Heart left ventricle (tissue), 16 donors: ENCODE measurements at regions of chr16 and their contacts with region 1.

Region 1: DNA sequence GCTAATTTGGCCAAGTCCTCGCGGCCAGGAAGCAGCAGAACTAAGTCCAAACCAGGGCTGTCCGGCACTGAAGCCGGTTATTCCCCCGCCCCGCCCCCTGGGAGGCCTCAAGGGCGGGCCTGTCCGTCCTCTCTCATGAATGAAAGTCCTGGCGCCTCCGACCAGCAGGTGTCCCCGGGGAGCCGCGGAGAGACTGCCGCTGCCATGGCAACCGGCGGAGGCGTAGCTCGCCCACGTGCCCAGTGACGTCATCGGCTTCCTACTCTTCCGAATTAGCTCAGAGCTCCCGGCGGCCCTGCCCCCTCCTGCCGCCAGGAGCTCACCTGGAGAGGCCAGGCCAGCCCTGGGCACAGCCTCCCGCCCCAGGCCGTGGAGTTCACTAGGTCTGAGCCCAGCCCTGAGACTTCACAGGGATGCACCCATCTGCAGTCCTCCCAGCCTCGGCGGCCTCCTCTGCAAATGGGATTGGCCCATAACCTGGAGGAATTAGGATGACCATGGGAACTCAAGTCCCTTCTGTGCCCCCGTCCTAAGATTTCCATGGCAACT is 1.3 kb downstream of the SPATA2L start:
- DNase-seq: peak; percentile 99
- ATAC-seq: peak; percentile 76 to 93 (median 80)
- H3K4me3 ChIP-seq: peak overlapping the region in 11 of 12 donors; percentile 52 to 89 (median 70)
- H3K27ac ChIP-seq: peak overlapping the region in 11 of 12 donors; percentile 26 to 89 (median 74)
- H3K4me1 ChIP-seq: peaks cover 6 to 27% (median 21%) of the 10 kb centered on the region in 12 donors
- H3K27me3 ChIP-seq: no peaks in the 10 kb centered on the region
- CTCF ChIP-seq: peak; percentile 55 to 84 (median 64)
- POLR2A ChIP-seq: peak in 1 of 2 donors; percentile 43

Region 2: DNA sequence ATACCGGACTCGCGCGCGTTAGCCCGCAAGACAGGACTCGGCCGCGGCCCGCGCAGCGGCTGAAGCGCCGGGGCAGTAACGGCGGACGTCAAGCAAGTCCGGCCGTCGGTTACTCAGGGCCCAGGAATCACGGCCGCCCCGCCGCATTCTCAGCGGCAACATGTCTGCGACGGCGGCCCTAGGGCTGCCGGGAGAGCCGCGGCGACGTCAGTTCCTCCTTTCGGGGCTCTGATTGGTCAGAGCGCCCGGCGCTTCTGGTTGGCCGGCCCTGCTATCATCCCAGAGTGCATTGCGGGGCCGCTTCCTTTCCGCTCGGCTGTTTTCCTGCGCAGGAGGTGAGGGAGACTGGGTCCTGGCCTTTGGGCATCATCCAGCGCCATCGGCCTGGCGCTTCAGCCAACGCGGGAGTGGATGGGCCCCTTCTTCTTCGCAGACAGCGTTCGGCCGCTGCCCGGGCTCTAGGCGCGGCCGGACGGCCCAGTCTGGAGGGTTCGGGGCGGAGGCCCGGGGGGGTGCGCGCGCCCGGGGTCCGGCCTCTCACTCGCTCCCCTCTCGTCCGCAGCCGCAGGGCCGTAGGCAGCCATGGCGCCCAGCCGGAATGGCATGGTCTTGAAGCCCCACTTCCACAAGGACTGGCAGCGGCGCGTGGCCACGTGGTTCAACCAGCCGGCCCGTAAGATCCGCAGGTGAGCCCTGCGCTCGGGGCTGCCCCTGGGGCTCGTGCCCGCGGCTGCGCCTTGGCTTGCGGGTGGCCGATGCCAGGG is 139.6 kb before region 1 on chr16 and contains the start of gene RPL13:
- intact Hi-C with region 1: loop called in 1 of 10 experiments (anchors 5 kb)
- DNase-seq: peak; percentile 95 to 97 (median 96)
- ATAC-seq: peak; percentile 94 to 97 (median 96)
- H3K4me3 ChIP-seq: peak within 1 kb of the TSS; percentile 33 to 97 (median 84)
- H3K27ac ChIP-seq: peak within 1 kb of the TSS; percentile 88 to 99 (median 95)
- H3K4me1 ChIP-seq: peaks cover 8 to 64% (median 30%) of the 10 kb centered on the region in 12 donors
- H3K27me3 ChIP-seq: no peaks in the 10 kb centered on the region
- CTCF ChIP-seq: peak in 1 of 12 donors; percentile 6
- POLR2A ChIP-seq: peak; percentile 68 to 97
- total RNA-seq, gene RPL13: 701 to 3,315 (median 1,152) TPM

Region 3: DNA sequence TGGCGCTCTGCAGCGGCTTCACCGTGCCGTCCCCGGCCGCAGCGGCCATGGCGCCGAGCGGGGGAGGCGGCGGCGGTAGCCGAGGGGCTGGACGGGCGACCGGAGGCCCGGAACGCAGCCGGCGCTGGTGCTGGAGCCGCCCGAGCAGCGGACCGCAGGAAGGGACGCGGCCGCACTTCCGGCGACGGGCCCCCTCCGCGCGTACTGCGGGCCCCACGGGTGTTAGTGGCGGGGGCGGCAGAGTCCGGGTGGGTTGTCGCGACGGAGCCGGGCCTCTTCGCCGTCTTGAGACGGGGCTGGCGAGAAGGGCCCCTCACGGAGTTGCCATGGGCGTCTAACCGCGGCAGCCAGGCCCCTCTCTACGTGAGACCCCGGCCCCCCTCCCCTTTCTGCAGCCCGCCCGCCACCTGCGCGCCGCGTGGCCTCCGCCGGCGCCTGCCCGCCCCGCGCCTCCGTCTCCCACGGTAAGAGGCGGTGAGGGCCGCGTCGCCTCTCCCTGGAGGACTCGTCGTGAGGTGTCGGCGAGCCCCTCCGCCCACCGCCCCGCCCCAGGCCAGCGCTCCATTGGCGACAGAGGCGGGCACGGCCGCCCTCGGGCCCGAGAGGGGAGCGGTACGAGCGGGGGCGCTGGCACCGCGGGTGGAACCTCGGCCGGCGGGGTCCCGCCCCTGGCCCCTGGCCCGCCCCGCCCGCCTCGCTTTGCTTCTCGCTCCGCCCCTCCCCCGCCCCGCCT is 20.8 kb after region 1 on chr16 and contains the starts of genes VPS9D1 and ZNF276:
- intact Hi-C with region 1: loop called in 2 of 10 experiments (anchors 2 kb)
- DNase-seq: peak; percentile 89 to 93 (median 90)
- ATAC-seq: peak; percentile 35 to 84 (median 76)
- H3K4me3 ChIP-seq: peak within 1 kb of the TSS; percentile 74 to 98 (median 92)
- H3K27ac ChIP-seq: peak within 1 kb of the TSS; percentile 95 to 100 (median 98)
- H3K4me1 ChIP-seq: peaks cover 8 to 60% (median 34%) of the 10 kb centered on the region in 12 donors
- H3K27me3 ChIP-seq: no peaks in the 10 kb centered on the region
- CTCF ChIP-seq: no peak
- POLR2A ChIP-seq: peak in 1 of 2 donors; percentile 49
- total RNA-seq, gene VPS9D1: 7.6 to 17.0 (median 11.0) TPM
- total RNA-seq, gene ZNF276: 9.4 to 19.9 (median 12.7) TPM

Region 4: GRCh38 chr16:89798832-89799370 is 98.7 kb after region 1 on chr16:
- intact Hi-C with region 1: loop called in 7 of 10 experiments (anchors 5 to 10 kb)
- DNase-seq: peak in 4 of 5 donors; percentile 12 to 58 (median 39)
- ATAC-seq: peak; percentile 84 to 89 (median 86)
- H3K4me3 ChIP-seq: peak overlapping the region in 5 of 12 donors; percentile 8 to 29 (median 9)
- H3K27ac ChIP-seq: peak overlapping the region; percentile 4 to 73 (median 39)
- H3K4me1 ChIP-seq: peaks cover 0 to 15% (median 7%) of the 10 kb centered on the region in 12 donors
- H3K27me3 ChIP-seq: no peaks in the 10 kb centered on the region
- CTCF ChIP-seq: no peak
- POLR2A ChIP-seq: no peak

Region 5: GRCh38 chr16:89873972-89874689 is 174.0 kb after region 1 on chr16:
- intact Hi-C with region 1: loop called in 2 of 10 experiments (anchors 5 to 10 kb)
- DNase-seq: peak; percentile 95 to 98 (median 96)
- ATAC-seq: peak; percentile 86 to 94 (median 92)
- H3K4me3 ChIP-seq: peak overlapping the region; percentile 61 to 98 (median 84)
- H3K27ac ChIP-seq: peak overlapping the region; percentile 91 to 100 (median 99)
- H3K4me1 ChIP-seq: peaks cover 0 to 24% (median 16%) of the 10 kb centered on the region in 12 donors
- H3K27me3 ChIP-seq: no peaks in the 10 kb centered on the region
- CTCF ChIP-seq: no peak
- POLR2A ChIP-seq: no peak

Region 6: GRCh38 chr16:90022209-90023064 is 322.3 kb after region 1 on chr16:
- intact Hi-C with region 1: no loop called
- DNase-seq: peak; percentile 94 to 97 (median 94)
- ATAC-seq: peak; percentile 86 to 95 (median 90)
- H3K4me3 ChIP-seq: peak overlapping the region; percentile 55 to 95 (median 82)
- H3K27ac ChIP-seq: peak overlapping the region in 11 of 12 donors; percentile 47 to 86 (median 70)
- H3K4me1 ChIP-seq: peaks cover 0 to 51% (median 35%) of the 10 kb centered on the region in 12 donors
- H3K27me3 ChIP-seq: peaks cover 0 to 12% (median 0%) of the 10 kb centered on the region in 9 donors
- CTCF ChIP-seq: no peak
- POLR2A ChIP-seq: peak in 1 of 2 donors; percentile 27